Activated T-helper 2 cell treated with anti-CD3 and anti-CD28 coated beads, Interferon-gamma antibody, Interleukin-2, Interleukin-4, amounts not matched to agents 10 μg/mL and 5 μg/mL and 100 μg/mL, durations not matched to agents 14 hours and 24 hours and 36 hours (primary cell): ENCODE measurements at regions of chr11 and their contacts with region 1.

Region 1: DNA sequence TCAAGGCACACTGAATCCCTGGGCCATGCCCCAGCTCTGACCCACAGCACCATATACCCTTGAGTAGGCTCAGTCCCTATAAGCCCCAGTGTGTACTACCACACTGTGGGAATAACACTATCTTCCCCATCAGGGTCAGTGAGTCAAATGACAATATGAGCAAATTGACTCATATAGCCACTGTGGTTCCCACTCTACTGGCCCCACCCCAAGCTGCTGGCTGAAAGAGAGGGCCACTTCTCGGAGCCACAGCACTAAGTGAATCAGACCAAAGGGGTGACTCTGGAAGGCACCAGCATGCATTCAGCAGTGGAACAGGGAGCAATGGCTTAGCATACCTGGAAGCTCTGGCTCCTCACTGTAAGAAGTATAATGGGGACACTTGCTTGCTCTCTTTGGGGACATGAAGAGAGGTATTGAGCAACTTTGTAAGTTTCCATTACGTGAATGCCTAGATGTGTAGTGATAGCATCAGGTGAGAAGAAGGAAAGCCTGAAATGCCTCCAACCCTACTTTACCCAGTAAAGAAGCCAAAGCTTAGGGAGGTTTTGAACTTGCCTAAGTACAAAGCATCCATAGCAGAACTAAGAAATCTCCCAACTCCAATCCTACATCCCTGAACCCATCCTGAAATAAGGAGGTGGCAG is 13.5 kb downstream of the CD59 start:
- DNase-seq: peak; percentile 38
- H3K4me3 Mint-ChIP-seq: peak overlapping the region; percentile 48
- H3K27ac Mint-ChIP-seq: peak overlapping the region; percentile 94
- H3K4me1 Mint-ChIP-seq: peaks cover 69% of the 10 kb centered on the region
- H3K27me3 Mint-ChIP-seq: peaks cover 6% of the 10 kb centered on the region

Region 2: GRCh38 chr11:32829680-32830412 is 892.9 kb before region 1 on chr11 and contains the start of gene PRRG4:
- intact Hi-C with region 1: loop called (anchors 5 kb)
- DNase-seq: peak; percentile 56
- H3K4me3 Mint-ChIP-seq: peak within 1 kb of the TSS; percentile 90
- H3K27ac Mint-ChIP-seq: peak within 1 kb of the TSS; percentile 87
- H3K4me1 Mint-ChIP-seq: peaks cover 13% of the 10 kb centered on the region
- H3K27me3 Mint-ChIP-seq: peaks cover 25% of the 10 kb centered on the region
- total RNA-seq, gene PRRG4: 1.1 and 1.3 TPM in 2 replicates

Region 3: GRCh38 chr11:33500861-33501479 is 221.7 kb before region 1 on chr11:
- intact Hi-C with region 1: no loop called
- DNase-seq: no peak
- H3K4me3 Mint-ChIP-seq: no peak overlapping the region
- H3K27ac Mint-ChIP-seq: no peak overlapping the region
- H3K4me1 Mint-ChIP-seq: no peaks in the 10 kb centered on the region
- H3K27me3 Mint-ChIP-seq: no peaks in the 10 kb centered on the region

Region 4: GRCh38 chr11:33670250-33671011 is 52.3 kb before region 1 on chr11:
- intact Hi-C with region 1: loop called (anchors 1 kb)
- DNase-seq: no peak
- H3K4me3 Mint-ChIP-seq: no peak overlapping the region
- H3K27ac Mint-ChIP-seq: peak overlapping the region; percentile 40
- H3K4me1 Mint-ChIP-seq: peaks cover 16% of the 10 kb centered on the region
- H3K27me3 Mint-ChIP-seq: no peaks in the 10 kb centered on the region

Region 5: DNA sequence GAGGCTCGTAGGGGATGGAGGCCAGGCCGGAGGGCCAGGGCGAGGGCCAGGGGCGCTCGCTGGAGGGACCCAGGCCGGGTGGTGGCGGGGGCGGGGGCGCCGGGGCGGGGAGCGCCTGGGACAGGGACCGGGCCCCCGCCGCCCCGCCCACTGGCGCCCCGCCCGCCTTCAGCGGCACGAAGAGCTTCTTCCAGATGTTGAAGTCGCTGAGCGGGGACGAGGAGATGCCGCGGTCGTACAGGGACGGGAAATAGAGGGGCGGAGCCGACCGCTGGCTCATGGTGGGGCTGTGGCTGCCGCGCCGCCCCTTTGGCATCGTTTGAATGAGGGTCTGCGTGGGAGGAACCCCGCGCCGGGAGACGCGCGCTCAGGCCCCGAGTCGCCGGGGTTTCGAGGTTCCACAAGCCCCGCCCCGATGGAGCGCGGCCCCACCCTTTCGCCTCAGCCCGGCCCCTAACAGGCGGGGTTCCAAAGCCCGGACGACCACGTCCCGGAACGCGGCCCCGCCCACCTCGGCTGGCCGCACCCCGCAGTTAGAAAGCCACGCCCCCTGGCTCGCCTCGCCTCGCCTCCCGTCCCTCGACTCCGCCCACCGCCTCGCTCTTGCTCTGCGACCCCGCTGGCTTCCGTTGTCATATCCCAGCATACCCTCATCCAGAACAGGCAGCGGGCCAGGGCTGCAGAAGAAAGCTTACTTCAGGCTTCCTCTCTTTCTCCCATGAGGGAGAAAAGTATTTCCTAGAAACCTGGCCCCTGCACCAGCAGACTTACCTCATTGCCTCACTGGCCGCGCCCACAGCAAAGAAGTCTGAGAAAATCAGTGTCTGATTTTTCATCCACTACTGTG is 22.1 kb before region 1 on chr11 and contains the start of gene C11orf91:
- intact Hi-C with region 1: loop called (anchors 1 kb)
- DNase-seq: peak; percentile 92
- H3K4me3 Mint-ChIP-seq: peak within 1 kb of the TSS; percentile 84
- H3K27ac Mint-ChIP-seq: peak within 1 kb of the TSS; percentile 14
- H3K4me1 Mint-ChIP-seq: peaks cover 14% of the 10 kb centered on the region
- H3K27me3 Mint-ChIP-seq: peaks cover 31% of the 10 kb centered on the region
- total RNA-seq, gene C11orf91: not detected in 2 replicates

Region 6: DNA sequence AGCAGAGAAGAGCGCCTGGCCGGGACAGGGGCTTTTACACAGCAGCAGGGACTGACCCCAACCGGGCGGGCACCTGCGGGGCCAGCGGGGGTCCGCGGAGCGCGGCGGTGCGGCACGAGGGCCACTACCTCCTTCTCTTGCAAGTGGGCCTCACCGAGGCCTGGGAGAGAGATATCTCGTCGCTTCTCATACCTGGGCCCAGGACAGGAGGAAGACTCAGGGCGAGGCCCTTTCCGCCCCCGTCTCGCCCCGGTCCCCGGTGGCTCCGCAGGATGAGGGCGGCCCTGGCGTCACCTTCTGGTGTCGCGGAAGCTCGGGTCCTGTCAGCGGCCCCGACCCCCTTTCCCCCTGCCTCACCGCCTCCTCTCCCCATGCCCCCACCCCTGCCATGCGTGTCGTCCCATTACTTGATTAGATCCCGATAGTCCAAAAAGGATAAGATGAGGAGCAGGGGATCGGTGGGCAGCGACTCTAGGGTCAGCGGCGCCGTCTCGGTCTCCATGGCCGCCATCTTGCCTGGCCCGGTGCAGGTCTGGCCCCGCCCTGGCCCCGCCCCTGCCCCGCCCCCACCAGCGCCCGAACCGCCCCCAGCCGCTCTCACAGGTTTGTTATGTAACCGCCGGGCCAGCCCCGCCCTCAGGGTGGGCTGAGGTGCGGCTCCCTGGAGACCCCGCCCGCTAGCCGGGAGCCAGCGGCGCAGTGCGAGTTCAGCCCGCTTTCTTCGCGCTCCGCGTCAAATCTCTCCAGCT is 51.5 kb after region 1 on chr11 and contains the start of gene FBXO3:
- intact Hi-C with region 1: loop called (anchors 5 kb)
- DNase-seq: peak; percentile 74
- H3K4me3 Mint-ChIP-seq: peak within 1 kb of the TSS; percentile 93
- H3K27ac Mint-ChIP-seq: peak within 1 kb of the TSS; percentile 87
- H3K4me1 Mint-ChIP-seq: peaks cover 35% of the 10 kb centered on the region
- H3K27me3 Mint-ChIP-seq: peaks cover 28% of the 10 kb centered on the region
- total RNA-seq, gene FBXO3: 13.9 TPM in 2 replicates

Region 7: GRCh38 chr11:33893711-33894397 is 171.2 kb after region 1 on chr11:
- intact Hi-C with region 1: loop called (anchors 2 kb)
- DNase-seq: peak; percentile 59
- H3K4me3 Mint-ChIP-seq: peak overlapping the region; percentile 16
- H3K27ac Mint-ChIP-seq: peak overlapping the region; percentile 46
- H3K4me1 Mint-ChIP-seq: peaks cover 19% of the 10 kb centered on the region
- H3K27me3 Mint-ChIP-seq: peaks cover 76% of the 10 kb centered on the region

Region 8: DNA sequence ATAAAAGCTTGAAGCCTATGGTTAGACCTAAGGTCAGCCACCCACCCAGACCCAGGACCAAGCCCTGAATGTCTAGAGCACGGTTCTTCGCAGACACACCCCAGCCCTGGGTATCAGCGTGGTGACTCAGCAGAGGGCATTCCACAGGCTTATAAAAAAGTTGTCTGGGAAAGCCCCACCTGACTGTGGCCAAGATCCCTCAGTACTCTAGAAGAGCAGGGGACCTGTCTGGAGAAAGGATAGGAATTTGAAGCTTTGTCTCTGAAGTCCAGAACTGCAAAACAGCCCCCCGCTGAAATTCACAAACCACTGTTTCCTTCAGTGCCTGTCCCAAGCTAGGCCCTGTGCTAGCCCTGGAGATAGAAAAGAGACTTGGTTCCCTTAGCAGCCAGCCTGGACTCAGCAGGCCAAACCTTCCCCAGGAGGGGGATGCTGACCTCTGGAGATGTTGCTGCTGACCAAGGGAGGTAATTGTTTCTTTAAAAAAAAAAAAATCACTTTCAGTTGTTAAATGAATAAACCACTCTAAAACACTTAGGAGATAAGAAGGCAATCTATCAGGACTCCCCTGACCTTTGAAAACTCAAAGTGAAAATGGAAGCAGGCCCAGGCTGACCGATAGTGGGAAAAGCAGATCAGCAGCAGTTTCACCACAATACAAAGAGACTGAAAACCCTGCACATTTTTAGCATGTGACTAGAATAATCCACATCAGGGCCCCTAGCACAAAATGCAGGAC is 521.2 kb after region 1 on chr11:
- intact Hi-C with region 1: loop called (anchors 5 kb)
- DNase-seq: peak; percentile 52
- H3K4me3 Mint-ChIP-seq: peak overlapping the region; percentile 45
- H3K27ac Mint-ChIP-seq: peak overlapping the region; percentile 83
- H3K4me1 Mint-ChIP-seq: peaks cover 87% of the 10 kb centered on the region
- H3K27me3 Mint-ChIP-seq: no peaks in the 10 kb centered on the region